Activated CD4-positive, alpha-beta T cell treated with anti-CD3 and anti-CD28 coated beads for 36 hours (primary cell): ENCODE measurements at regions of chrX and their contacts with region 1.

Region 1: DNA sequence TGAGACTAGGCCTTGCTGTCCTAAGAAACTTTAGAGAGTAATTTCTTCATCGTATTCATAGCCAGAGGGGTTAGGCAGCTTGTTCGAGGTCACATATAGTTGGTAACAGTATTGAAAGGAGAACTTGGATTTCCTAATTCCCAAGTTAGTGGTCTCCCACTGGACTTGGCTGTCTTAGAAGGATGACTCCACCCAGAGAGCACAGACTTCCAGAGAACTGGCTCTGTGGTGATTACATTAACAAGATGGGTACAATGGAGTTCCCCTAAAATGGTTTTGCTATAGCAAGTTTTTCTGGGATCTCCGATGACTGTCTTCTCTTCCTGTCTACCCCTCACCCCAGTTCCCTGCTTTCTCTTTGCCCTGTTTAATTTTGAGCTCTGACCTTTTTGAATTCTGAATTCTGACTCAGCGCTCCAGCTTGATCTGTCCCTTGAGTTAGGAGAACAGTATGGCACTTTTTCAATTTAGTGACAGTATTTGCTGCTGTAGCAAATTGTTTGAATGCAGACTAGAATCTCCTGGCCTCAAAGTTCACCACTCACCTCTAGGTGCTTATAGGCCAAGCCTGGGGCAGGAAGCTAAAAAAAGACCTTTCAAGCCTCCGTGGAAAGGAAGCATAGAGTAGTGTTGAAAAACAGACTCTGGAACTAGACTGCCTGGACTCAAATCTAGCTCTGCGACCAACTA is 6.9 kb downstream of the MSN start:
- DNase-seq: peak; percentile 10
- ATAC-seq: peak; percentile 52
- H3K4me3 Mint-ChIP-seq: peak overlapping the region; percentile 91
- H3K27ac Mint-ChIP-seq: peak overlapping the region; percentile 99
- H3K4me1 Mint-ChIP-seq: peaks cover 69% of the 10 kb centered on the region
- H3K27me3 Mint-ChIP-seq: no peaks in the 10 kb centered on the region

Region 2: DNA sequence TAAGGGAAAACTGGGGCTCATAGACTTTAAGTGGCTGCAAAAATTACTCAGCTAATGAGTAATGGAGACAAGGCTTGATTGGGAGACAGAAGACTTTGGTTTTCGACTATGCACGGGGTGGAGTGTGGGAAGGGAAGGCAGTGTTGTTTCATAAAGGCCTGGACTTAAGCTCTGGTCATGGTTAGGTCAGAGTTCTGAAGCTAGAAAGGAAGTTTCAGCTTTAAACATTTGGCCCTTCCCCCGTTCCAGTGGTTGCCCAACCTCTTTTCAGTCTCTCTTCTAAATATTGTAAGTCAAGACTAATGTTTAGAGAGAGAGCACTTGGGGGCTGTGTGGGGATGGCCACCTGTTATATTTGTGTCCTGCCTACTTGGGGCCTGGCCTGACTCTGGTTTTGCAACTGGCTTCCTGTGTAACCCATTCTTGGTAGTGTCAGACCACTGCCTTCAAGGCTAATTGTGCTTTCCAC is 14.1 kb after region 1 on chrX:
- CTCF ChIA-PET with region 1: interaction called, 15 read pairs
- POLR2A ChIA-PET with region 1: interaction called, 5 read pairs
- intact Hi-C with region 1: loop called in 1 of 2 experiments (anchors 2 kb)
- DNase-seq: no peak
- ATAC-seq: peak; percentile 47
- H3K4me3 Mint-ChIP-seq: peak overlapping the region; percentile 15
- H3K27ac Mint-ChIP-seq: peak overlapping the region; percentile 86
- H3K4me1 Mint-ChIP-seq: peaks cover 81% of the 10 kb centered on the region
- H3K27me3 Mint-ChIP-seq: no peaks in the 10 kb centered on the region

Region 3: GRCh38 chrX:65706041-65706828 is 31.9 kb after region 1 on chrX:
- CTCF ChIA-PET with region 1: interaction called, 4 read pairs
- POLR2A ChIA-PET with region 1: interaction called, 3 read pairs
- intact Hi-C with region 1: loop called (anchors 2 kb)
- DNase-seq: peak; percentile 81
- ATAC-seq: peak; percentile 86
- H3K4me3 Mint-ChIP-seq: peak overlapping the region; percentile 44
- H3K27ac Mint-ChIP-seq: peak overlapping the region; percentile 91
- H3K4me1 Mint-ChIP-seq: peaks cover 68% of the 10 kb centered on the region
- H3K27me3 Mint-ChIP-seq: no peaks in the 10 kb centered on the region

Region 4: DNA sequence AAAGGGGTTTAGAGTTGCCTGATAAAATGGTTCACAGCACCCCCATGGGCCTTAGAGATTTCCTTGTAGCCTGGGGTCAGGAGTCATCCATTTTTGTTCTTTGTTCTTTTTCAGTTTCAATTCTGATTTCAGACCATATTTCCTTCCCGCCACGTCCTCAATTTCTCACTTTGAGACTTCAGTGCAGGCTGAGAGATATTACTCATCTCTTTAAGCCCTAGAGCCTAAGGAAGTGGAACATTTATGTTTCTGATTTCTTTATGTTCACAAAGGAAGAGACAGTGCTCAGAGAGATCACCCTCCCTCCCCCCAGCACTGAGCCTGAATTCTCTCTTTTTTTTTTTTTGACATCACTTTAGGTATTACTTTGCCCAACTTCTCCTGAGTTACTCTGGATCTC is 49.4 kb after region 1 on chrX:
- CTCF ChIA-PET with region 1: no interaction called
- POLR2A ChIA-PET with region 1: interaction called, 7 read pairs
- intact Hi-C with region 1: loop called (anchors 2 to 5 kb)
- DNase-seq: peak; percentile 60
- ATAC-seq: peak; percentile 86
- H3K4me3 Mint-ChIP-seq: peak overlapping the region; percentile 19
- H3K27ac Mint-ChIP-seq: peak overlapping the region; percentile 88
- H3K4me1 Mint-ChIP-seq: peaks cover 87% of the 10 kb centered on the region
- H3K27me3 Mint-ChIP-seq: no peaks in the 10 kb centered on the region

Region 5: DNA sequence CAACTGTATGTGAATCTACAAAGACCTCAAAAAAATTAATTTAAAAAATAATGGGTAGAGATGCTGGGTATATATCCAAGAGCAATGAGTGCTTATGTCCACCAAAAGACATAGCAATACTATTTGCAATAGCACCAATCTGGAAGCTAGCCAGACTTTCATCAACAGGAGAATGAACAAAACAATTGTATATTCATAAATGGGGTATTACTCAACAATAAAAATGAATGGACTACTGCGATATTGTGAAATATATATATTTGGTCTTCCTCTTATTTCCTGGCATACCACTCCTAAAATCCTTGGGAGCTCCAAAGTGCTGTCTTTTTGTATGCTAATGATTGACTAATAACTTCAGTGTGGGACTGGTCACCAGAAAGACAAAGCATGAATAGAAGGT is 70.6 kb after region 1 on chrX:
- CTCF ChIA-PET with region 1: interaction called, 4 read pairs
- POLR2A ChIA-PET with region 1: no interaction called
- intact Hi-C with region 1: loop called in 1 of 2 experiments (anchors 5 kb)
- DNase-seq: no peak
- ATAC-seq: peak; percentile 4
- H3K4me3 Mint-ChIP-seq: no peak overlapping the region
- H3K27ac Mint-ChIP-seq: no peak overlapping the region
- H3K4me1 Mint-ChIP-seq: peaks cover 60% of the 10 kb centered on the region
- H3K27me3 Mint-ChIP-seq: no peaks in the 10 kb centered on the region